ENCODE measurements at regions of chr11 and their contacts with region 1.

Region 1: DNA sequence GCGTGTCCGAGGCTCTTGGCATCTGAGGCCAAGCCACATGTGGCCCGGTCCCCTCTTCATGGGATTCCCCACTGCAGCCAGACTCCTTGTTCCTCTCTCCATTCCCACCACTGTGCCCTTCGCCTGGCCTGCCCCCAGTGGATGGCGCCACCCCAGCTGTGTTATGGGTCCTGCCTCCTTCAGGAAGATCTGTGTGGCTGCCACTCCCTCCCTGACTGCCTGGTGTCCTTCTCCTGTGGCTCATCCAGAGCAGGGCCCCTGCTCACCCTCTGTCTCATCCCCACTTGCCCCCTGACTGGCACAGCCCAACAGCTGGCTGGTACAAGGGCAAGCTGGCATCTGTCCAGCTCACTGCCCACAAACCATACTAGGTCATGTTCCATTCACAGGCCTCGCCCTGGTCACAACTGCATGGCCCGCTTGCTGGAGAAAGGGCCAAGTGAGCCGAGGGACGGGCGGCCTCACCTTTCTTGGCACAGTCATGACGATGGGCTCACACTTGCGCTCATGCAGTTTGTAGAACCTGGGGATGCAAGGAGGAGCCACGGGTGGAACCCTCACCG is 1.9 kb upstream of the PTPRCAP start:
- DNase-seq: peak; percentile 64
- ATAC-seq: no peak
- H3K4me3 Mint-ChIP-seq: peak overlapping the region; percentile 87
- H3K27ac Mint-ChIP-seq: peak overlapping the region; percentile 86
- H3K4me1 Mint-ChIP-seq: peaks cover 49% of the 10 kb centered on the region
- H3K27me3 Mint-ChIP-seq: no peaks in the 10 kb centered on the region
- CTCF ChIP-seq: peak; percentile 20

Region 2: GRCh38 chr11:67409261-67409666 is 30.1 kb before region 1 on chr11:
- CTCF ChIA-PET with region 1: no interaction called
- POLR2A ChIA-PET with region 1: interaction called, 130 read pairs
- intact Hi-C with region 1: no loop called
- DNase-seq: peak; percentile 88
- ATAC-seq: peak; percentile 63
- H3K4me3 Mint-ChIP-seq: peak overlapping the region; percentile 87
- H3K27ac Mint-ChIP-seq: peak overlapping the region; percentile 88
- H3K4me1 Mint-ChIP-seq: peaks cover 66% of the 10 kb centered on the region
- H3K27me3 Mint-ChIP-seq: no peaks in the 10 kb centered on the region
- CTCF ChIP-seq: no peak

Region 3: GRCh38 chr11:67428052-67428914 is 11.1 kb before region 1 on chr11 and contains the start of gene RPS6KB2:
- CTCF ChIA-PET with region 1: interaction called, 3 read pairs
- POLR2A ChIA-PET with region 1: interaction called, 178 read pairs
- intact Hi-C with region 1: no loop called
- DNase-seq: peak; percentile 100
- ATAC-seq: peak; percentile 81
- H3K4me3 Mint-ChIP-seq: peak within 1 kb of the TSS; percentile 94
- H3K27ac Mint-ChIP-seq: peak within 1 kb of the TSS; percentile 96
- H3K4me1 Mint-ChIP-seq: peaks cover 22% of the 10 kb centered on the region
- H3K27me3 Mint-ChIP-seq: no peaks in the 10 kb centered on the region
- CTCF ChIP-seq: no peak
- total RNA-seq, gene RPS6KB2: 54.8 to 57.4 TPM

Region 4: DNA sequence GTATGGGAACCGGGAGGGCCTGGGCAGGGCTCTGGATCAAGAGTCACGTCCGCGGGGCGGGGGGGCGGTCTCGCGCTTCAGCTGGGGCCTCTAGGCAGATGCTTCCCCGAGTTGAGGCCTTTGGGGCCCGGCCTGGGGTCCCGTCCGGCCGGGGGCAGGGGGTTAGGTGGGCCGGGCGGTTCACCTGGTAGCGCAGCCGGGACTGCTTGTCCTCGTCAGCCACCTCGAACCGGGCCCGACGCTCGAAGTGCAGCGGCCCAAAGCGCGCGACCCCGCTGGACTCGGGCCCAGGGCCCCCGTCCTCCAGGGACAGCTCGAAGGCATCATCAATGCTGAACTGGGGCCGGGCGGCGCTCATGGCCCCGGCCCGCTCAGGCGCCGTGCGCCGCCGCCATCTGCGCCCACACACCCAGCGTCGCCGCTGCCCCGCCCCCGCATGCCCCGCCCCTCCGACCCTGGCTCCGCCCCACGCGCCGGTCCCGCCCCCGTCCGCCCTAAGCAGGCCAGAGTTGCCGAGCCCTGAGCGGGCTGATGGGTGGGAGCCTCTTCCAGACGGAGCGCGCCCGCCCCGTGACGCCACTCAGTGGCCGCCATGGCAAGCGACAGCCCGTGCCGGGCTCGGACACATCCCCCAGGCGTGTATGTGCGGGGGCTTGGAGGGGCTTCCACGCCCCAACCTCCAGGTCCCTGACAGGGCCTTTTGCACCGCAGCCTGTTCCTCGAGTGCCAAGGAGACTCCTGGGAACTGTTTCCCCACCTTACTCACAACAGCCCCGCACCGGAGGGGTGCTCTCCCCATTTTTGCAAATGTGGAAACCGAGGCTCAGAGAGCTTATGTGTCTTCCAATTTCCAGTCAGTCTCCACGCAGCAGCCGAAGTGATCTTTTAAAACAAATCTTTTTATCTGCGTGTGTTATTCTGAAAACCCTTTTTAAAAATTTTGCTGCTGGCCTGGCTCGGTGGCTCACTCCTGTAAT is 29.7 kb after region 1 on chr11 and contains the start of gene TMEM134:
- CTCF ChIA-PET with region 1: interaction called, 8 read pairs
- POLR2A ChIA-PET with region 1: interaction called, 83 read pairs
- intact Hi-C with region 1: no loop called
- DNase-seq: peak; percentile 94
- ATAC-seq: peak; percentile 86
- H3K4me3 Mint-ChIP-seq: peak within 1 kb of the TSS; percentile 95
- H3K27ac Mint-ChIP-seq: peak within 1 kb of the TSS; percentile 92
- H3K4me1 Mint-ChIP-seq: peaks cover 33% of the 10 kb centered on the region
- H3K27me3 Mint-ChIP-seq: no peaks in the 10 kb centered on the region
- CTCF ChIP-seq: peak; percentile 28
- total RNA-seq, gene TMEM134: 56.0 to 59.2 TPM

Region 5: GRCh38 chr11:67507864-67508485 is 68.6 kb after region 1 on chr11 and contains the start of gene CDK2AP2:
- CTCF ChIA-PET with region 1: interaction called, 5 read pairs
- POLR2A ChIA-PET with region 1: interaction called, 10 read pairs
- intact Hi-C with region 1: loop called (anchors 5 kb)
- DNase-seq: peak; percentile 100
- ATAC-seq: peak; percentile 78
- H3K4me3 Mint-ChIP-seq: peak within 1 kb of the TSS; percentile 89
- H3K27ac Mint-ChIP-seq: peak within 1 kb of the TSS; percentile 88
- H3K4me1 Mint-ChIP-seq: peaks cover 33% of the 10 kb centered on the region
- H3K27me3 Mint-ChIP-seq: no peaks in the 10 kb centered on the region
- CTCF ChIP-seq: no peak
- total RNA-seq, gene CDK2AP2: 53.5 to 55.5 TPM

Measured in activated CD8-positive, alpha-beta T cell treated with anti-CD3 and anti-CD28 coated beads for 36 hours (primary cell).